ENCODE measurements at regions of chr9 and their contacts with region 1.

Region 1: GRCh38 chr9:12884737-12885414 is 110.1 kb downstream of the LURAP1L start:
- DNase-seq: peak in 1 of 10 donors; percentile 16
- H3K4me3 ChIP-seq: no peak overlapping the region
- H3K27ac ChIP-seq: no peak overlapping the region
- H3K27me3 ChIP-seq: no peaks in the 10 kb centered on the region
- CTCF ChIP-seq: peak in 55 of 56 donors; percentile 39 to 84 (median 62)

Region 2: DNA sequence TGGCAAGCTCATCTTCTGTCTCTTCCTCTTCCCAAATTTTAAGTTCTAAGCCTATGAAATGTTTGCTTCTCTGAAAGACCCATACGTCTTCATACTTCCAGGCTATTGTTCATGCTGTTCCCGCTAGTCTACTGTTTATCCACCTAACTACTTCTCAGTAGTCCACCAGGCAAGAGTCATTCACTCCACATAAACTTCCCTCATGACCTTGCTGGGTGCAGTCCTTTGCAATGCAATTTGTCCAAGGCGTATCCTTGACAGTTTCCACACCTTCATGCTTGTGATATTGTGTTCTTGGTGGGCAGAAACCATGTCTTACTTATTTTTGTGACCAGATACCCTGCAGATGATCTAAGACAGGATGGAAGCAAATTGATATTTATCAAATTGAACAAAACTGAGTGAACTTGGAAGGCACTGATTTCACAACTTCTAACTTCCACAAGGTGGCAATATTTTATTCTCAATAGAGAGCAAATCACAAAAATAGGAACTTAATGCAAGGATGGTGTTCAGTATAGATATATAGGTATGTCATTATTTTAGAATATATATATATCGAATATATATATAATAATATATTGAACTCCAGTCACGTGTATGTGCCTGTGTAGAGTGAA is 161.4 kb before region 1 on chr9:
- intact Hi-C with region 1: loop called (anchors 2 to 5 kb)
- DNase-seq: no peak
- H3K4me3 ChIP-seq: no peak overlapping the region
- H3K27ac ChIP-seq: peak overlapping the region in 2 of 59 donors; percentile 43 to 46
- H3K27me3 ChIP-seq: no peaks in the 10 kb centered on the region
- CTCF ChIP-seq: peak; percentile 46 to 82 (median 68)

Measured in dorsolateral prefrontal cortex (tissue), 120 donors.